ENCODE measurements at regions of chr18 and their contacts with region 1.

Region 1: DNA sequence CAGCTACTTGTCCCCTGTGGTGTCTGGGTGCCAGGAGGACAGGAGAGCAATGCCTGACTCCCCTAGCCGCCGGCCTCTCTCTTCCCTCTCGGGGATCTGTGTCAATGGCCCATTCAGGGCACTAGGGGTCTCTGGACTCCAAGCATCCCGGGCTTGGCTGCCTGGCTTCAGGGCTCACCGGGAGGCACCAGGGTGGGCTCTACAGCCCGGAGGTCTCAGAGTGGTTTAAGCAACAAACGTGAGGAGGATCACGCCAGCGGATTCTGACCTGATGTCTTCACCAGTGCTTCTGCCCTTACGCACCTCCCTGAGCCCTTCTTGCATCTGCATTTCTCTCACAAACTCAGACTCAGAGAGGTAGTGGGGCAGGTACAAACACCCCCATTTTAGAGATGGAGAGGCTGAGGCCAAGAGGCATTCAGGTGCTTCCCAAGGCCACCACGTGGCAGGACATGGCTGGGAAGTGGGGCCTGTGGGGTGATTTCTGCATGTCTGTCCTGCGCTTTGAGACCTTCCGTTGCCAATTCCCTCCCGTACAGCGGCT is 243.0 kb downstream of the CELF4 start:
- H3K4me3 ChIP-seq: no peak overlapping the region
- H3K27ac ChIP-seq: no peak overlapping the region
- H3K4me1 ChIP-seq: no peaks in the 10 kb centered on the region
- CTCF ChIP-seq: peak; percentile 76

Region 2: GRCh38 chr18:36352384-36352783 is 970.2 kb before region 1 on chr18:
- CTCF ChIA-PET with region 1: no interaction called
- POLR2A ChIA-PET with region 1: no interaction called
- H3K4me3 ChIP-seq: no peak overlapping the region
- H3K27ac ChIP-seq: no peak overlapping the region
- H3K4me1 ChIP-seq: no peaks in the 10 kb centered on the region
- CTCF ChIP-seq: no peak

Region 3: GRCh38 chr18:37188016-37188791 is 134.4 kb before region 1 on chr18:
- CTCF ChIA-PET with region 1: no interaction called
- POLR2A ChIA-PET with region 1: no interaction called
- H3K4me3 ChIP-seq: no peak overlapping the region
- H3K27ac ChIP-seq: no peak overlapping the region
- H3K4me1 ChIP-seq: no peaks in the 10 kb centered on the region
- CTCF ChIP-seq: no peak

Region 4: GRCh38 chr18:37294951-37295350 is 27.6 kb before region 1 on chr18:
- CTCF ChIA-PET with region 1: interaction called, 17 read pairs
- POLR2A ChIA-PET with region 1: no interaction called
- H3K4me3 ChIP-seq: no peak overlapping the region
- H3K27ac ChIP-seq: no peak overlapping the region
- H3K4me1 ChIP-seq: peaks cover 7% of the 10 kb centered on the region
- CTCF ChIP-seq: peak; percentile 36; the same call in 1 of the 2 replicates

Region 5: GRCh38 chr18:37309055-37309454 is 13.5 kb before region 1 on chr18:
- CTCF ChIA-PET with region 1: interaction called, 29 read pairs
- POLR2A ChIA-PET with region 1: no interaction called
- H3K4me3 ChIP-seq: no peak overlapping the region
- H3K27ac ChIP-seq: no peak overlapping the region
- H3K4me1 ChIP-seq: no peaks in the 10 kb centered on the region
- CTCF ChIP-seq: peak; percentile 50

Region 6: DNA sequence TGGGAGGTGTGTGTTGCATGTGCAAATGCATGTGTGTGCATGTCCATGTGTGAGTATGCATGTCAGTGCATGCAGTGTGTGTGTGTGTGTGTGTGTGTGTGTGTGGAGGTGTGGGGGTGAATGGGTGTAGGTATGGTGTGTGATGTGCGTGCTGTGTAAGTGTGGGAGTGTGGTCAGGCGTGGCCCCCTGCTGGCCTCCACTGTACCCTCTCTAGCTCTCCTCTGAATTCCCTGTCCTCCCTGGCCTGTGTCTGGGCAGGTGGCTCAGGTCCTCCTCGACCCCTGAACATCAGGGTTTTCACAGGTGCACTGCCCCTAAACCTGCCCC is 12.8 kb after region 1 on chr18:
- CTCF ChIA-PET with region 1: interaction called, 42 read pairs
- POLR2A ChIA-PET with region 1: no interaction called
- H3K4me3 ChIP-seq: no peak overlapping the region
- H3K27ac ChIP-seq: no peak overlapping the region
- H3K4me1 ChIP-seq: no peaks in the 10 kb centered on the region
- CTCF ChIP-seq: peak; percentile 96

Region 7: DNA sequence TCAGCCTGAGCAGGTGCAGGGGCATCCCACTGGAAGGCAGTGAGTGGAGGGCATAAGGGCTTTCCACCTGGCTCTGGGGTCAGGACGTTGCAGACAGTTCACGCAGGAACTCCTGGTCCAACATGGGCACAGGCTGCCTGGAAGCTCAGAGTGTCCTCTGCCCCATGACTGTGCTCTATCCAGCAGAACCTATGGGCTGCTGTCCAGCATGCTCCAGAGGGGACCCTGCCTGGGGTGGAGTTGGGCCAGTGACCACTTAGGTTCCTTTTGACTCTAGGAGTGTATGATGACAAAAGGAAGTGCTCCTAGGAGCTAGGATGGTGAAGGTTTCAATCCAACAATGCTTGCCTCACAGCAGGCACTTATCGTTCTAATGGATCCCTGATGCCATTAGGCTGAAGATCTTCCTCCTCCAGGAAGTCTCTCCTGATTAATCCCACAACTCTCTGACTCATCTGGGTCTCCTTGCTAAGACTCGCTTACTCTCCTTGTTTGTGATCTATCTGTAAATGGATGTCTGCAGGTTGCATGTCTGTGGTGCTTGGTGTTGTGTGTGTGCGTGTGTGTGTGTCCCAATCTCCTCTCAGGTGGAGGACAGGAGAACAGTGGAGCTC is 19.0 kb after region 1 on chr18:
- CTCF ChIA-PET with region 1: interaction called, 42 read pairs
- POLR2A ChIA-PET with region 1: no interaction called
- H3K4me3 ChIP-seq: no peak overlapping the region
- H3K27ac ChIP-seq: no peak overlapping the region
- H3K4me1 ChIP-seq: no peaks in the 10 kb centered on the region
- CTCF ChIP-seq: no peak

Measured in HEK293 (cell line).